Caco-2 (cell line): ENCODE measurements at regions of chr12 and their contacts with region 1.

Region 1: GRCh38 chr12:100348657-100349454 is 8.0 kb upstream of the SLC17A8 start:
- DNase-seq: peak in 1 of 2 experiments; percentile 23
- H3K4me3 ChIP-seq: no peak overlapping the region
- H3K4me3 Mint-ChIP-seq: no peak overlapping the region
- H3K27ac Mint-ChIP-seq: no peak overlapping the region
- H3K4me1 ChIP-seq: no peaks in the 10 kb centered on the region
- H3K4me1 Mint-ChIP-seq: no peaks in the 10 kb centered on the region
- H3K27me3 ChIP-seq: no peaks in the 10 kb centered on the region
- H3K27me3 Mint-ChIP-seq: peaks cover 3% of the 10 kb centered on the region
- CTCF ChIP-seq: peak; percentile 28 to 56

Region 2: GRCh38 chr12:100234598-100235304 is 114.1 kb before region 1 on chr12:
- CTCF ChIA-PET with region 1: interaction called, 4 read pairs
- POLR2A ChIA-PET with region 1: no interaction called
- intact Hi-C with region 1: loop called (anchors 1 kb)
- DNase-seq: peak in 1 of 2 experiments; percentile 31
- H3K4me3 ChIP-seq: no peak overlapping the region
- H3K4me3 Mint-ChIP-seq: peak overlapping the region; percentile 23
- H3K27ac Mint-ChIP-seq: no peak overlapping the region
- H3K4me1 ChIP-seq: peaks cover 9% of the 10 kb centered on the region
- H3K4me1 Mint-ChIP-seq: peaks cover 13% of the 10 kb centered on the region
- H3K27me3 ChIP-seq: no peaks in the 10 kb centered on the region
- H3K27me3 Mint-ChIP-seq: no peaks in the 10 kb centered on the region
- CTCF ChIP-seq: peak; percentile 53 to 64

Region 3: DNA sequence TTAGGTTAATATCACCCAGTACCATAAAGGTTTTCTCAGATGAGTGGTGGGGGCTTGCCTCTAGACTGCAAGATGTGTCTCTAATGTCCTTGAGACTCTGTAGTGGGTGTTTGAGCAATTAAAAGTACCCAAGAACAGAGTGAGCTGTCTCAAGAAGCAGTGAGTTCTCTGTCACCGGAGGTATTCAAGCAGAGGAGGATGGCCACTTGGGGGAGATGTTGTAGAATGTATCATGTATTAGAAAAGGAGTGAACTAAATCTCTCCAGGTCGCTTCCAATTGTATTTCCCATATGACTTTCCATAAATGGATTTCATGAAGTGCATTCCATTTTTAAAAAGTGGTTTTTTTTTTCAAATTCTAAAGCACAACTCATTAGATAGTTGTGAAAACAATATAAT is 43.0 kb after region 1 on chr12:
- CTCF ChIA-PET with region 1: no interaction called
- POLR2A ChIA-PET with region 1: no interaction called
- intact Hi-C with region 1: loop called (anchors 1 kb)
- DNase-seq: peak in 1 of 2 experiments; percentile 30
- H3K4me3 ChIP-seq: no peak overlapping the region
- H3K4me3 Mint-ChIP-seq: no peak overlapping the region
- H3K27ac Mint-ChIP-seq: no peak overlapping the region
- H3K4me1 ChIP-seq: no peaks in the 10 kb centered on the region
- H3K4me1 Mint-ChIP-seq: no peaks in the 10 kb centered on the region
- H3K27me3 ChIP-seq: no peaks in the 10 kb centered on the region
- H3K27me3 Mint-ChIP-seq: peaks cover 5% of the 10 kb centered on the region
- CTCF ChIP-seq: peak; percentile 31 to 47

Region 4: GRCh38 chr12:100554608-100555077 is 205.8 kb after region 1 on chr12:
- CTCF ChIA-PET with region 1: interaction called, 3 read pairs
- POLR2A ChIA-PET with region 1: no interaction called
- intact Hi-C with region 1: loop called (anchors 1 kb)
- DNase-seq: peak; percentile 40 to 83
- H3K4me3 ChIP-seq: no peak overlapping the region
- H3K4me3 Mint-ChIP-seq: no peak overlapping the region
- H3K27ac Mint-ChIP-seq: no peak overlapping the region
- H3K4me1 ChIP-seq: no peaks in the 10 kb centered on the region
- H3K4me1 Mint-ChIP-seq: no peaks in the 10 kb centered on the region
- H3K27me3 ChIP-seq: no peaks in the 10 kb centered on the region
- H3K27me3 Mint-ChIP-seq: peaks cover 2% of the 10 kb centered on the region
- CTCF ChIP-seq: peak; percentile 86 to 96

Region 5: GRCh38 chr12:100668945-100669536 is 320.2 kb after region 1 on chr12:
- CTCF ChIA-PET with region 1: no interaction called
- POLR2A ChIA-PET with region 1: no interaction called
- intact Hi-C with region 1: loop called (anchors 1 kb)
- DNase-seq: peak; percentile 74 to 83
- H3K4me3 ChIP-seq: no peak overlapping the region
- H3K4me3 Mint-ChIP-seq: no peak overlapping the region
- H3K27ac Mint-ChIP-seq: no peak overlapping the region
- H3K4me1 ChIP-seq: no peaks in the 10 kb centered on the region
- H3K4me1 Mint-ChIP-seq: no peaks in the 10 kb centered on the region
- H3K27me3 ChIP-seq: no peaks in the 10 kb centered on the region
- H3K27me3 Mint-ChIP-seq: peaks cover 7% of the 10 kb centered on the region
- CTCF ChIP-seq: peak; percentile 85 to 92

Region 6: GRCh38 chr12:100733817-100734593 is 385.1 kb after region 1 on chr12:
- CTCF ChIA-PET with region 1: no interaction called
- POLR2A ChIA-PET with region 1: no interaction called
- intact Hi-C with region 1: loop called (anchors 1 kb)
- DNase-seq: peak in 1 of 2 experiments; percentile 12
- H3K4me3 ChIP-seq: no peak overlapping the region
- H3K4me3 Mint-ChIP-seq: no peak overlapping the region
- H3K27ac Mint-ChIP-seq: no peak overlapping the region
- H3K4me1 ChIP-seq: no peaks in the 10 kb centered on the region
- H3K4me1 Mint-ChIP-seq: no peaks in the 10 kb centered on the region
- H3K27me3 ChIP-seq: no peaks in the 10 kb centered on the region
- H3K27me3 Mint-ChIP-seq: peaks cover 14% of the 10 kb centered on the region
- CTCF ChIP-seq: peak; percentile 58 to 69